SK-N-SH (cell line): ENCODE measurements at regions of chr7 and their contacts with region 1.

Region 1: DNA sequence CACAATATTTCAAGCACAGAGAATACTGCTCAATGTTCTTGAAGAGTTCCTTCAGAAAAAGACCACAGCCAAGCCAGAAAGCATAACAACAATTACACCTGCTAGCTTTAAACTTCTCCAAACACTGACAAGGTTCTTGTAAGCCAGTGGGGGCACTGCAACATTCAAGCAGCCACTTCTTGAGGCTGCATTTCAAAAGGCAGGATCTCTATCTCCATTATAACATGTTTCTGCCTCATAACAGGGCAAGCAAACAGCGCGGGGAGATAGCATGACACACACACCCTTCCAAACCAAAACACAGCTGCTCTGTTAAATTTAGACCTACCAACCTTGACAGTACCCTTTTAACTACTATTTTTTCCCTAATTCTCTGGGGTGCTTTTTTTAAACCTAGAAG is 30.8 kb downstream of the CHCHD3 start:
- DNase-seq: peak; percentile 61
- H3K4me3 ChIP-seq: no peak overlapping the region
- H3K27ac ChIP-seq: peak overlapping the region in 1 of 2 experiments; percentile 7; a peak in 2 of 4 replicates
- H3K4me1 ChIP-seq: peaks cover 19 to 23% of the 10 kb centered on the region in 2 experiments
- H3K27me3 ChIP-seq: no peaks in the 10 kb centered on the region
- CTCF ChIP-seq: peak; percentile 53
- EP300 ChIP-seq: no peak
- RAD21 ChIP-seq: peak; percentile 63

Region 2: DNA sequence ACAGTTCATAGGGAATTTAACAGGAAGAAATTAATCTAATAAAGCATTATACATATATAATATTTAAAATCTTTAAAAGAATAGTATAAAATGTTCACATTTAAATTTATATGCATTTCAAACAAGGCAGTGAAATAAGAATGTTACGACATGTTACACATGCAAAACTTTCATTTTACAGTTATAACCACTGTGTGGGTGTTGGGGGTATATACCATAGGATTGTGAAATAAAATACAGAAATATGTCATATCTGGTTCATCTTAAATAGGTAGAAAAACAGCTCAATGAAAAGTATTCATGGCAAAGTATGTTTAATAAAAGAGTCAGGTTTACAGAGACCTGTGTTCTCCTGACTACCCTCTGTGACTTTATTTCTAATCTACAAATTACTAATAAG is 14.8 kb before region 1 on chr7:
- CTCF ChIA-PET with region 1: interaction called, 18 read pairs
- POLR2A ChIA-PET with region 1: no interaction called
- DNase-seq: no peak
- H3K4me3 ChIP-seq: no peak overlapping the region
- H3K27ac ChIP-seq: no peak overlapping the region
- H3K4me1 ChIP-seq: no peaks in the 10 kb centered on the region; a peak in 1 of 4 replicates
- H3K27me3 ChIP-seq: no peaks in the 10 kb centered on the region
- CTCF ChIP-seq: no peak
- EP300 ChIP-seq: no peak
- RAD21 ChIP-seq: no peak

Region 3: DNA sequence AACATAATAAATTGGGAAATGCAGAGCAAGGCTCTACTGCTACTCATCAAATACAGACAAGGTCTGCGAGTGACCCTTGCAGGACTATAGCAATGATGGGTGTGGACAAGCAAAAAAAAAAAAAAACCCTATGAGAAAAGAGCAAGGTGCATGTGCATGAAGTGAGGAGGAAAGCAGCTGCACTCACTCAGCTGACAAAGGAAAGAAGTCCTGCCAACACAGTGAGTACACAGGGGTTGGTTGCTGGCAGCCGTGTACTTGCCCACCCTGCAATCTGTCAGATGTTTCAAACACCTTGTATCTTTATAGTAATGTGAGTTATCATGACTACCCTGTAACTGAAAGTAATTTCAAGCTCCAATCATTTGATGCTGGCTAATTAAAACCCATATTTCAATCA is 10.3 kb after region 1 on chr7:
- CTCF ChIA-PET with region 1: interaction called, 13 read pairs
- POLR2A ChIA-PET with region 1: no interaction called
- DNase-seq: no peak
- H3K4me3 ChIP-seq: no peak overlapping the region
- H3K27ac ChIP-seq: no peak overlapping the region
- H3K4me1 ChIP-seq: peaks cover 0 to 6% of the 10 kb centered on the region in 2 experiments; a peak in 1 of 4 replicates
- H3K27me3 ChIP-seq: no peaks in the 10 kb centered on the region
- CTCF ChIP-seq: no peak
- EP300 ChIP-seq: no peak
- RAD21 ChIP-seq: no peak

Region 4: DNA sequence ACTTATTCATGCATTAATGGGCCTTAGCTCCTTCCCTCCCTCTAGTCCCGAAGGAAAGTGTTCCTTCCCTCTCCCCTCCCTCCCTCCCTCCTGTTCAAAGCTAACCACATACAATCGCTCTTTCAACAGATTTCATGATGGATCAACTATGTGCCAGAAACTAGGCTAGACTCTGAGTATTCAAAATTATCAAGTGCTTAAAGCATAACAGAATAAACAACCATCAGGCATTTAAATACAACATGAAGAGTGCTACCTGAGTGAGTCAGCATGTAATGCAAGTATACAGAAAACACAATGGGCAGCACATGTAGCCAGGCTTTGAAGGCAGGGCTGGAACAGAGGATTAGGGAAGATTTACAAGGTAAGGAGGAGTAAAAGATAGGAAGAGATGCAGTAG is 19.5 kb after region 1 on chr7:
- CTCF ChIA-PET with region 1: interaction called, 20 read pairs
- POLR2A ChIA-PET with region 1: no interaction called
- DNase-seq: no peak
- H3K4me3 ChIP-seq: no peak overlapping the region
- H3K27ac ChIP-seq: no peak overlapping the region
- H3K4me1 ChIP-seq: no peaks in the 10 kb centered on the region; a peak in 2 of 4 replicates
- H3K27me3 ChIP-seq: no peaks in the 10 kb centered on the region
- CTCF ChIP-seq: no peak
- EP300 ChIP-seq: no peak
- RAD21 ChIP-seq: no peak

Region 5: GRCh38 chr7:133155146-133155545 is 104.1 kb after region 1 on chr7:
- CTCF ChIA-PET with region 1: no interaction called
- POLR2A ChIA-PET with region 1: no interaction called
- DNase-seq: no peak
- H3K4me3 ChIP-seq: no peak overlapping the region
- H3K27ac ChIP-seq: no peak overlapping the region
- H3K4me1 ChIP-seq: peaks cover 0 to 4% of the 10 kb centered on the region in 2 experiments; a peak in 1 of 4 replicates
- H3K27me3 ChIP-seq: no peaks in the 10 kb centered on the region; the same call in 1 of the 2 replicates
- CTCF ChIP-seq: no peak
- EP300 ChIP-seq: no peak
- RAD21 ChIP-seq: no peak